ENCODE measurements at regions of chr11 and their contacts with region 1.

Region 1: DNA sequence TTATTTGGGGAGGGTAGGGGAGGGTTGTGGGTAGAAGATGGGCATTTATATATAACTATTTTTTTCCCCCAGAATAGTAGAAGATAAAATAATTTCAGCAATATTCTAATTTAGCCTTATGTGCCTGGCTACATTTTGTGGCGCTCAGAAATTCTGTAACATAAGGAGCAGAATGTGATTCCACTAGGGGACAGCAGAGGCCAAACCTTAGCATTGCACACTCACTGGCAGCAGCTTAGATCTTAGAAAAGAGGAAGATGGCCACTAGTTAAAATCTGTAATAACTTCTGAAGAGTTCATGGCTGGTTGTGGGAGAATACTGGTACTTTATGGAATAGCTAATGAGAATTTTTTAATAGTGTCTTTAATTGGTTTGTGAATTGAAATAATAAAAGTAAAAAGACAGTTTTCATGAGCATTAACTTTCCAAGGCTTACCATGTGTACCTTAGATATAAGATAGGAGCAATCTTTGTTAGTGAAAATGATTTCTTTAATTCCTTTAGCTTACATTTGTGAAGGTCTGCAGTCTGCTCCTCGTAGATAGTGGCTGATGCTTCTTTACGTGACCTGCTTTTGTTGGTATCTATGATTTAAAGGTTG is 33.1 kb downstream of the DDX10 start:
- DNase-seq: peak in 2 of 3 donors; percentile 18 to 53
- ATAC-seq: peak; percentile 72 to 80
- H3K4me3 ChIP-seq: no peak overlapping the region
- H3K27ac ChIP-seq: no peak overlapping the region
- H3K4me1 ChIP-seq: no peaks in the 10 kb centered on the region
- H3K27me3 ChIP-seq: no peaks in the 10 kb centered on the region

Region 2: DNA sequence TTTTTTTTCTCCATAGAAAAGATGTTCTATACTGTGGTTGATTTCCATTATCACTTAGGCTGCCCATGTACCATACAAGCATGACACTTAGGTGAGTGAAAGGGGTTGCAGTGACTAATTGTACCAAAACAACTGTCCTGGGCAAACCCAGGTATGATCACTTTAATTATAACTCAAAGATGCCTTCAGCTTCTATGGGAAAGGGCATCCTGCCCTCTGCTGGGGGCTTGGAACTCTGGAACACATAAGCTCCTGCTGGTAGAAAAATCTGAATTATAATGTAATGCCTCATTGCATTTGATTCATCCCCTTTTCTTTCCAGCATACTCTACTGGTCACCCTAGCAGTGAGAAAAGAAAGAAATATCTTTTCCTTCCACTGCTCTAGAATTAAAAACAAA is 173.2 kb after region 1 on chr11:
- intact Hi-C with region 1: loop called in 1 of 4 experiments (anchors 10 kb)
- DNase-seq: peak in 2 of 3 donors; percentile 50 to 76
- ATAC-seq: peak; percentile 29 to 49
- H3K4me3 ChIP-seq: no peak overlapping the region
- H3K27ac ChIP-seq: no peak overlapping the region
- H3K4me1 ChIP-seq: no peaks in the 10 kb centered on the region
- H3K27me3 ChIP-seq: no peaks in the 10 kb centered on the region

Region 3: DNA sequence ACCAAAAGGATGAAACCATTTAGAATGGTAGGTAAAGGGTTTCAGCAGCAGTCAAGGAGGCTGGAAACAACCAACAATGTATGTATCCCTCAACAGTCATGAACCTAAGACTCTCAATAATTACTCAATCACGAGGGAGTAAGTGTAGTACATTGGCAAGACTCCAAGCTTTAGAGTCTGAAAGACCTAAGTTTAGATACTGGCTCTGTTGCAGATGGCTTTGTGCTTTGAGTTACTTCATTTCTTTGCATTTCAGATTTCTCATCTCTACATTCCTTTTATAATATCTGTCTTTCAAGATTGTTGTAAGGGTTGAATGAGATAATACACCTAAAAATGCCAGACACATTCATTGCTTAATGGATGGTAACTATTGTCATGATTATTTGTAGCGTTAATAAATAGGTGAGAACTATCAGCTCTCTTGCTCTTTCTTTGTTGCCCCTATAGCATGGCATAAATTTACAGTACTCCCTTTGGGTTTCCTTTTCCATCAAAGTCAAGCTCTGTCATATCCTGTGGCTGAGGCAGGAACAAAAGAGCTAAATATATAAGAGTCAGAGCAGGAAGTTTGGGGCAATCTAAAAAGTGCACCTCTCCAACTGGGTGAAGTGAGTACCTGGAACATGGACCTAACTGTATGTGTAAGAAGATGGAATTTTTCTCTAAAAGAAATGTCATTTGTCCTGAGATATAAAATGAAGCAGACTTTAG is 1167.0 kb after region 1 on chr11:
- intact Hi-C with region 1: loop called in 2 of 4 experiments (anchors 5 to 10 kb)
- DNase-seq: no peak
- ATAC-seq: no peak
- H3K4me3 ChIP-seq: no peak overlapping the region
- H3K27ac ChIP-seq: no peak overlapping the region
- H3K4me1 ChIP-seq: no peaks in the 10 kb centered on the region
- H3K27me3 ChIP-seq: no peaks in the 10 kb centered on the region

Region 4: DNA sequence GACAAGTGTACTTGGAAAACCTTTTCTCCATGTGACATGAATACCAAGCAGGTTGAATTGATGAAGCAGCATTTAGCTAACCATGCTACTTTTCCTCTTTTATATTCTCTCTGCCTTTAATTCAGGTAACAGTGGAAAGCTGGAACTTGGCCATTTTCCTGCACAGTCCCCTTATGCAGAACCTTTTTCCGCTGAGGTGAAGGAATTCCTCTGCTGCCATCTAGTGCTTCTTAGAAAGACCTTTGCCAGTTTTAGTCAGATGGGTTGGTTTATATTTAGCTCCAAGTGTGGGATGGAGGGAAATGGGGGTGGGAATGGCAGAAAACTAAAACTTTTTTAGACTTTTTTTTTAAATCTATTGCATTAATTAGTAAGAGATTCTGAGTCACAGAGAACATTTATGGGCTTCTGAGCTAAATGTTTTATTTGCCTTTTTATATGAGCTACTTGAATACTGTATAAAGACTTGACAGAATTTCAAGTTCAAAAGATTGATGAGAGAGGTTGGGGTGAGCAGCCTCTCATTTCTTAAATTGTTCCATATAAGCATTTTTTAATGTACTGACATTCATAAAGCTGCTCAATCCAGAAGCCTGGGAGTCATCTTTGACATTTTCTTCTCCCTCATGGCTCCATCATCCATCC is 1241.3 kb after region 1 on chr11:
- intact Hi-C with region 1: loop called in 1 of 4 experiments (anchors 10 kb)
- DNase-seq: no peak
- ATAC-seq: peak; percentile 62 to 69
- H3K4me3 ChIP-seq: no peak overlapping the region
- H3K27ac ChIP-seq: no peak overlapping the region
- H3K4me1 ChIP-seq: no peaks in the 10 kb centered on the region
- H3K27me3 ChIP-seq: no peaks in the 10 kb centered on the region

Measured in right cardiac atrium (tissue), 5 donors.